Posterior vena cava (tissue), 2 donors: ENCODE measurements at regions of chr2 and their contacts with region 1.

Region 1: GRCh38 chr2:102806250-102806837 is 44.5 kb downstream of the TMEM182 start:
- DNase-seq: no peak

Region 2: DNA sequence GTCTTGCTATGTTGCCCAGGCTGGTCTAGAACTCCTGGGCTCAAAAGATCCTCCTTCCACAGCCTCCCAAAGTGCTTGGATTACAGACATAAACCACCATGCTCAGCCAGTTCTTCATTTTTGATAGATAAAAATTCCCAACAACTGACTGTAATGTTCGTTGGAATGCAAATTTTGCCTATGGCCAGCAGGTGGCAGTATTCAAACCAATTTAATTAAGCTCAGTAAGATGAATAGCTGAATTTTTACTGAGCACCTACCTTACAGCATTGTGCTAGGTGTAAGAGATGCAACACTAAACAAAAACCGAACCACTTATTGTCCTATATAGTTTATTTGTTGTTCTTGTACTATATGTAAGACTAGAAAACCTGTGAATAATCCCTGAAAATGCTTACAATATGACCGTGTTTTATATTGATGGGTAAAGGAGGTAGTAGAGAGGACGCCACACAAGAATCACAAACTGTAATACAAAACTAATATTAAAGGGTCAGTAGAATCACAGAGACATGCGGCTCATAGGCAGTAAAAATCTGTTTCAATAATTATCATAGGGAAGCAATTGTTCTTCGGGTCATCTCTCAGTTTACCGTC is 52.7 kb before region 1 on chr2:
- intact Hi-C with region 1: loop called (anchors 2 to 5 kb)
- DNase-seq: no peak

Region 3: GRCh38 chr2:102782933-102783332 is 23.4 kb before region 1 on chr2:
- intact Hi-C with region 1: no loop called
- DNase-seq: no peak

Region 4: DNA sequence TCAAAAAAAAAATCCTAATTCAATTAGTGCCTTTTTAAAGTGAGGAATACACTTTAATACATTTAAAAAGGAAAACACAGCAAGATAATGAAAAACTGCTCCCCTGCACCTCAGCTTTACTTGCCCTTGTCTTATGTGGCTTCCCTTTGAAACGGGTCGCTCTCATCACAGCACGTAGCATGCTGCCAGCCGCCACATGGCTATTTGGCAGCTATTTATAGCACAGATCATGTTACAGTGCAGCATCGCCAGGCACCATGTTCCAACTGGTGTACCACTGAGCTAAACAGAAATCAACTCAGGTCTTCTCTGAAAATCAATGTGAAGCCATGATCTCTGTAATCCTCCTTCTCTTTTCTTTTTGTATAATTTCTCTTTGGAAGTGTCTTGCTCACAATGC is 20.6 kb after region 1 on chr2:
- intact Hi-C with region 1: no loop called
- DNase-seq: no peak

Region 5: DNA sequence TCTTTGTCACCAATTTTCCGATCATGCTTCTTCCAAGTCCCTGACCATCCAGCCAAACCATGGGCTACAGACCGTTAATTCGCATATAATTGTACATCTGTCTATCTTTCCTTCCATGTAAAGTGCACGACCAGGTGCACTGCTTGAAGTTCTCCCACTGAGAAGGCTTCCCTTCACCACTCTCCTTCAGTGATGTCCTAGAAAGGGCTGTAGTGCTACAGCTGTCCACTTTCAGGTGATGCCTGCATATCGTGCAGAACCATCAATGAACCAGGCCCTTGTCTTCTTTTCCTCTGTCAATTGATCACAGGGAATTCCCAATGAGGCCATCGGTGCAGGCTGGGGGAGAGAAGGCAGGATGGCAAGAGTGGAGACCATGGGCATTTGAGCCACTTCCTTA is 104.4 kb after region 1 on chr2:
- intact Hi-C with region 1: no loop called
- DNase-seq: no peak

Region 6: DNA sequence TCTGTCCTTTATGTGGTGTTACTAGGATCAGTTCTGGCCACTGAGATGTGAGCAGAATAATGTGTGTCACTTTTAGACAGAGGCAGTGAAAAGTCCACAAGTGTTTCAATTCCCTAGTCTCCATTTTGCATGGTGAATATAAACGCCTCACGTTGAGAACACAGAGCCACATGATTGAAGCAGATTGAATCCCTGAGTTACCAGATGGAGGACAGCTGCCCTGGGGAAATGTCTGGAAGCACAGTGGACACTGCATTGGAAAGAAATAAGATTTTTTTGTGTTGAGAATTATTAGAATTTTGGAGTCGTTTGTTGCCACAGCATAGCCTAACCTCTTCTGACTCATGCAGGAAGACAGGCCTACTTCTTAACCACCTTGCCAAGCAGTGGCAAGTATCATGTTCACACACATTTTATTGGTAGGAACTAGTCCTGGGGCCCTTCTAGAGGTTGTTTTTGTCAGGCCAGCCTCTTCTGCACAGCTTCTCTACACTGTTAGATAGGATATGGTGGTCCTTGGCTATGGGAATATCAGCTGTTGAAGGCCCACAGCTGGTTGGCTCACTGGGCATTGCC is 144.1 kb after region 1 on chr2:
- intact Hi-C with region 1: no loop called
- DNase-seq: no peak